Activated CD8-positive, alpha-beta T cell treated with anti-CD3 and anti-CD28 coated beads for 36 hours (primary cell): ENCODE measurements at regions of chr12 and their contacts with region 1.

Region 1: DNA sequence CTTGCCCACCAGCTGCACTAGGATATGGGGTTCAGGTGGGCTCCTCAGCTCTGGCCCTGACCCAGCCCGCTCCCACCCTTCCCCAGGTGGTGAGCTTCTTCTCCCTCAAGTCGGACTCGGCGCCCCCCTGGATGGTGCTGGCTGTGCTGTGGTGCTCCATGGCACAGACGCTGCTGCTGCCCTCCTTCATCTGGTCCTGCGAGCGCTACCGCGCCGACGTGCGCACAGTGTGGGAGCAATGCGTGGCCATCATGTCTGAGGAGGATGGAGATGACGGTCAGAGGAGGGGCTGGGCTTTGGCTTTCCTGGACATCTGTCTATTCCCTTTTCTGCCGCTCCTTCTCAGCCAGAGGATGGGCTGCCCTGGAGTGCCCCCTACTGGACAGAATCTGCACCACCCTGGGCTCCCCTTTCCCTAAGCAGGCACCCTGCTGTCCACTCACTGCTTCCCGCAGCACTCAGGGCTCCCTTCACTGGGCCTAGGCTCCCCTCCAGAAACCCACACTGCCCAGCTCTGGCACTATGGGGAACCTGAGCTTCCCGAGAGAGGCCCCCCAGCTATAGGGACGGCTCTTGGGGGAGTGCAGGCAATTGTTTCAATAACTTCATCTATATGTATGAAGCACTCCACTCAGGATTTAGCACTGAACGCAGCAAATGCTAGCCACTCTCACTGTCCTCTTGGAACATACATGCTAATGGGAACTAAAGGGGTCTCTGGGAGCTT is 2.6 kb upstream of the P3H3 start:
- DNase-seq: peak; percentile 89
- ATAC-seq: peak; percentile 70
- H3K4me3 Mint-ChIP-seq: no peak overlapping the region
- H3K27ac Mint-ChIP-seq: no peak overlapping the region
- H3K4me1 Mint-ChIP-seq: peaks cover 30% of the 10 kb centered on the region
- H3K27me3 Mint-ChIP-seq: peaks cover 70% of the 10 kb centered on the region
- CTCF ChIP-seq: peak; percentile 93

Region 2: GRCh38 chr12:6635856-6636531 is 189.6 kb before region 1 on chr12 and contains the start of gene LPAR5:
- CTCF ChIA-PET with region 1: no interaction called
- POLR2A ChIA-PET with region 1: no interaction called
- intact Hi-C with region 1: no loop called
- DNase-seq: peak; percentile 72
- ATAC-seq: peak; percentile 63
- H3K4me3 Mint-ChIP-seq: peak within 1 kb of the TSS; percentile 74
- H3K27ac Mint-ChIP-seq: peak within 1 kb of the TSS; percentile 96
- H3K4me1 Mint-ChIP-seq: peaks cover 48% of the 10 kb centered on the region
- H3K27me3 Mint-ChIP-seq: no peaks in the 10 kb centered on the region
- CTCF ChIP-seq: no peak
- total RNA-seq, gene LPAR5: 6.6 to 8.1 TPM

Region 3: DNA sequence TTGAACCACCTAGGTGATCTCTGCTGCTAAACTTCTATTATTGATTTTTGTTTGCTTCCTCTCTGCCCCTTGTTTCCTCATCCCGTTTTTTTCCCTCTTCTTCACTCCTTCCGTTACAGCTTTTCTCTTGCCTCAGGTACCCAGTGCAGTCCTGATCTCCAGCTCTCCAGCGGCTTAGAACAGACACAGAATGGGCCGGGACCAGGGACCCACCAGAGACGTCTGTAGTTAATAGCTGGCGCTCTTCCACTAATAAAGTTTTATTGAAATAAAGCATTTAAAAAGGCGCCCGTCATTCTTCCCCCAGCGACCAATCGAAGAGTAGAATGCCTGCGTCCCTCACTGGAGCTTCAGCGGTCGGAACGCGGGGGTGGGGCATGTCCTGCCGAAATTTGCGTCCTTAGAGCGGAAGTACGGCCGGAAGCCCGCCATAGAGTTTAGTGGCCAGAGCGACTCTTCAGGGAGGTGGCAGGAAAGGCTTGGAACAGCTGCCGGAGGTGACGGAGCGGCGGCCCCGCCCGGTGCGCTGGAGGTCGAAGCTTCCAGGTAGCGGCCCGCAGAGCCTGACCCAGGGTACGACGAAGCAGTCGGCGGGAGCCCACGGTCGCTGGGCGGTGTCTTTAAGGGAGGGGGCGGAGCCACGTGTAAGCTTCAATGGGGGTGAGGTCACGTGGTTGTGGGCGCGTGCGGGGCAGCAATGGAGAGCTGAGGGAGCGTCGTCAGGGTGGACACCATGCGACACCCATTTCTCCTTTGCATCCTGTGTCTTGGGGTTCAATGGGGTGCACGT is 101.8 kb before region 1 on chr12 and contains the start of gene COPS7A:
- CTCF ChIA-PET with region 1: interaction called, 15 read pairs
- POLR2A ChIA-PET with region 1: interaction called, 7 read pairs
- intact Hi-C with region 1: no loop called
- DNase-seq: peak; percentile 100
- ATAC-seq: peak; percentile 94
- H3K4me3 Mint-ChIP-seq: peak within 1 kb of the TSS; percentile 85
- H3K27ac Mint-ChIP-seq: peak within 1 kb of the TSS; percentile 97
- H3K4me1 Mint-ChIP-seq: peaks cover 24% of the 10 kb centered on the region
- H3K27me3 Mint-ChIP-seq: no peaks in the 10 kb centered on the region
- CTCF ChIP-seq: no peak
- total RNA-seq, gene COPS7A: 35.9 to 38.8 TPM

Region 4: GRCh38 chr12:6764011-6764828 is 61.3 kb before region 1 on chr12:
- CTCF ChIA-PET with region 1: interaction called, 341 read pairs
- POLR2A ChIA-PET with region 1: interaction called, 4 read pairs
- intact Hi-C with region 1: no loop called
- DNase-seq: peak; percentile 71
- ATAC-seq: peak; percentile 84
- H3K4me3 Mint-ChIP-seq: peak overlapping the region; percentile 42
- H3K27ac Mint-ChIP-seq: no peak overlapping the region
- H3K4me1 Mint-ChIP-seq: peaks cover 29% of the 10 kb centered on the region
- H3K27me3 Mint-ChIP-seq: peaks cover 32% of the 10 kb centered on the region
- CTCF ChIP-seq: no peak

Region 5: GRCh38 chr12:6813363-6813762 is 12.2 kb before region 1 on chr12:
- CTCF ChIA-PET with region 1: interaction called, 19 read pairs
- POLR2A ChIA-PET with region 1: interaction called, 3 read pairs
- intact Hi-C with region 1: no loop called
- DNase-seq: no peak
- ATAC-seq: no peak
- H3K4me3 Mint-ChIP-seq: no peak overlapping the region
- H3K27ac Mint-ChIP-seq: no peak overlapping the region
- H3K4me1 Mint-ChIP-seq: peaks cover 7% of the 10 kb centered on the region
- H3K27me3 Mint-ChIP-seq: peaks cover 2% of the 10 kb centered on the region
- CTCF ChIP-seq: no peak

Region 6: DNA sequence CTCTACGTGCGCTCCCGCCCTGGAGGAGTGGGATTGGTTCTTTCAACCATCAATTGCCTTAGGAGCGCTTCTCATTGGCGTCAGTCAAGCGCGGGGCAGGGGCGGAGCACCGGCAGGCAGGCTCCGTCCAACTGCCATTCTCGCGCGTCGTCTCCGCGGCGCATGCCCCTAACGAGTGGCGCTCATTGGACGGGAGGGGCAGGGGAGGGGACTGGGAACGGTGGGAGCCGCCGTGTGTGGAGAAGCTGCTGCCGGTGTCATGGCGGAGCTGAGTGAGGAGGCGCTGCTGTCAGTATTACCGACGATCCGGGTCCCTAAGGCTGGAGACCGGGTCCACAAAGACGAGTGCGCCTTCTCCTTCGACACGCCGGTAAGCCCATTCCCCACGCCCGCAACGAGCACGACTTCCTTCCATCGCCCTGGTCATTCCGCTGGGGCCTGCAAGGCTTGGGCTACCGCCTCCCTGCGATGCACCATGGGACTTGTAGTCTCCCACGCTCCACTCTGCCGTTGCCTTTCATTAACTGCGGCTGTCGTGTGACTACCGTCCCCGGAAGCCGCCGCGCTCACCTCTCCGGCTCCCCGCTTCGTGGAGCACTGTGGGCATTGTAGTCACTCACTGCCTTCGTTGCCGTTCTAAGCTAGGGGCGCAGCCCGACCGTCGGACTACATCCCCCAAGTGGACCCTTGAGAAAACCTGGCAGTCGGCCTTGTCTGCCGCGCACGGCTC is 26.5 kb after region 1 on chr12 and contains the start of gene USP5:
- CTCF ChIA-PET with region 1: interaction called, 80 read pairs
- POLR2A ChIA-PET with region 1: interaction called, 8 read pairs
- intact Hi-C with region 1: no loop called
- DNase-seq: peak; percentile 99
- ATAC-seq: peak; percentile 79
- H3K4me3 Mint-ChIP-seq: peak within 1 kb of the TSS; percentile 86
- H3K27ac Mint-ChIP-seq: peak within 1 kb of the TSS; percentile 98
- H3K4me1 Mint-ChIP-seq: peaks cover 29% of the 10 kb centered on the region
- H3K27me3 Mint-ChIP-seq: no peaks in the 10 kb centered on the region
- CTCF ChIP-seq: no peak
- total RNA-seq, gene USP5: 109 to 112 TPM